K562 (cell line): ENCODE measurements at regions of chr1 and their contacts with region 1.

Region 1: GRCh38 chr1:54764133-54764921 is at the start of gene PARS2:
- DNase-seq: peak; percentile 99 to 100 (median 100)
- ATAC-seq: peak; percentile 97
- H3K4me3 ChIP-seq: peak within 1 kb of the TSS; percentile 87
- H3K27ac ChIP-seq: peak within 1 kb of the TSS; percentile 75
- H3K4me1 ChIP-seq: peaks cover 0 to 7% of the 10 kb centered on the region in 2 experiments; a peak in 2 of 5 replicates
- H3K27me3 ChIP-seq: no peaks in the 10 kb centered on the region; a peak in 1 of 5 replicates
- CTCF ChIP-seq: no peak; a peak in 2 of 6 replicates
- EP300 ChIP-seq: no peak
- POLR2A ChIP-seq: peak; percentile 95
- RAD21 ChIP-seq: no peak
- polyA plus RNA-seq, gene PARS2: 6.3 to 11.4 TPM

Region 2: DNA sequence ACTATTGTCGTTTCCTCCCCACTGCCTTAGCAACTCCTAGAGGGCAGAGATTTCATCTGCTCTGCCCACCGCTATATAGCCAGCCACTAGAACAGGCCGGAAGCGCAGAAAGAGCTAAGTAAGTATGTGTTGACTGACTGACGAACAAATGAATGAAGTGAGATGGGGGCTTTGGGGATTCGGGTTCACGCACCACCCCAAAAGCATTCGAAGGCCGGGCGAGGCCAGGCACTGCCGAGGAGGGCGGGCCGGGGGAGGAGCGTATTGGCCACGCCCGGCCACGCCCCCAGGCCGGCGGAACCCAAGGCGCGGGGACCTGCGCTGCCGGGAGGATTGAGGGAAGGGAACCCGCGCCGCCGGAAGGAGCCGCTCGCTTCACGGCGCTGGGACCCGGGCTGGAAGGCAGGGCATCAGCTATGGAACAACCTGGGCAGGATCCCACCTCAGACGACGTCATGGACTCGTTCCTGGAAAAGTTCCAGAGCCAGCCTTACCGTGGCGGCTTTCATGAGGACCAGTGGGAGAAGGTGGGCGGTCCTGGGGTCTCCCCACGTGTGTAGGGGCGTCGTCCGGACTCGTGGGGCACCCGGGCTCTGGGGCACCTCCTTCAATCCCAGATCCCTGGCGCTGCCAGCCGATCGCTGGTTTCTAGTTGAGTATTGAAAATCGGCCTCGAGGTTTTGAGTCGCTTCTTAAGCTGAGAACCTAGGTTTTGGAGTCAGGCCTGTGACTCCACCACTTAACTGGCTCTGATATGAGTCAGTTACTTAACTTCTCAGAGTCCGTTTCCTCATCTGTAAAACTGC is 48.6 kb before region 1 on chr1 and contains the start of gene TTC4:
- CTCF ChIA-PET with region 1: no interaction called
- POLR2A ChIA-PET with region 1: no interaction called
- in situ Hi-C with region 1: no loop called
- intact Hi-C with region 1: loop called (anchors 2 kb)
- DNase-seq: peak; percentile 92 to 97 (median 96)
- ATAC-seq: peak; percentile 99
- H3K4me3 ChIP-seq: peak within 1 kb of the TSS; percentile 88
- H3K27ac ChIP-seq: peak within 1 kb of the TSS; percentile 83
- H3K4me1 ChIP-seq: peaks cover 5 to 8% of the 10 kb centered on the region in 2 experiments; a peak in 4 of 5 replicates
- H3K27me3 ChIP-seq: peaks cover 9 to 17% of the 10 kb centered on the region in 2 experiments; a peak in 4 of 5 replicates
- CTCF ChIP-seq: 0 out of 6 replicates have a peak, but pooled peaks of 1 of the 3 experiments have one; percentile 17
- EP300 ChIP-seq: peak; percentile 51
- POLR2A ChIP-seq: peak; percentile 97
- RAD21 ChIP-seq: no peak
- polyA plus RNA-seq, gene TTC4: 46.1 to 111 TPM

Region 3: GRCh38 chr1:54743416-54744226 is 20.7 kb before region 1 on chr1:
- CTCF ChIA-PET with region 1: no interaction called
- POLR2A ChIA-PET with region 1: interaction called, 10 read pairs
- in situ Hi-C with region 1: no loop called
- intact Hi-C with region 1: no loop called
- DNase-seq: no peak
- ATAC-seq: peak; percentile 10
- H3K4me3 ChIP-seq: no peak overlapping the region
- H3K27ac ChIP-seq: no peak overlapping the region
- H3K4me1 ChIP-seq: no peaks in the 10 kb centered on the region
- H3K27me3 ChIP-seq: peaks cover 0 to 15% of the 10 kb centered on the region in 2 experiments; a peak in 2 of 5 replicates
- CTCF ChIP-seq: no peak
- EP300 ChIP-seq: no peak
- POLR2A ChIP-seq: peak; percentile 37; the same call in 1 of the 2 replicates
- RAD21 ChIP-seq: no peak

Region 4: GRCh38 chr1:54750596-54750995 is 13.7 kb before region 1 on chr1:
- CTCF ChIA-PET with region 1: no interaction called
- POLR2A ChIA-PET with region 1: interaction called, 19 read pairs
- in situ Hi-C with region 1: no loop called
- intact Hi-C with region 1: no loop called
- DNase-seq: no peak
- ATAC-seq: no peak
- H3K4me3 ChIP-seq: no peak overlapping the region
- H3K27ac ChIP-seq: no peak overlapping the region
- H3K4me1 ChIP-seq: peaks cover 0 to 14% of the 10 kb centered on the region in 2 experiments; a peak in 2 of 5 replicates
- H3K27me3 ChIP-seq: peaks cover 6 to 23% of the 10 kb centered on the region in 2 experiments; a peak in 4 of 5 replicates
- CTCF ChIP-seq: no peak
- EP300 ChIP-seq: no peak
- POLR2A ChIP-seq: no peak
- RAD21 ChIP-seq: no peak

Region 5: GRCh38 chr1:54810100-54810942 is 46.0 kb after region 1 on chr1:
- CTCF ChIA-PET with region 1: no interaction called
- POLR2A ChIA-PET with region 1: no interaction called
- in situ Hi-C with region 1: no loop called
- intact Hi-C with region 1: no loop called
- DNase-seq: peak; percentile 70 to 80 (median 79)
- ATAC-seq: peak; percentile 95
- H3K4me3 ChIP-seq: no peak overlapping the region
- H3K27ac ChIP-seq: no peak overlapping the region
- H3K4me1 ChIP-seq: peaks cover 0 to 6% of the 10 kb centered on the region in 2 experiments; a peak in 1 of 5 replicates
- H3K27me3 ChIP-seq: peaks cover 22 to 60% of the 10 kb centered on the region in 2 experiments
- CTCF ChIP-seq: peak; percentile 84 to 93 (median 92)
- EP300 ChIP-seq: no peak
- POLR2A ChIP-seq: no peak
- RAD21 ChIP-seq: peak; percentile 87 to 93

Region 6: DNA sequence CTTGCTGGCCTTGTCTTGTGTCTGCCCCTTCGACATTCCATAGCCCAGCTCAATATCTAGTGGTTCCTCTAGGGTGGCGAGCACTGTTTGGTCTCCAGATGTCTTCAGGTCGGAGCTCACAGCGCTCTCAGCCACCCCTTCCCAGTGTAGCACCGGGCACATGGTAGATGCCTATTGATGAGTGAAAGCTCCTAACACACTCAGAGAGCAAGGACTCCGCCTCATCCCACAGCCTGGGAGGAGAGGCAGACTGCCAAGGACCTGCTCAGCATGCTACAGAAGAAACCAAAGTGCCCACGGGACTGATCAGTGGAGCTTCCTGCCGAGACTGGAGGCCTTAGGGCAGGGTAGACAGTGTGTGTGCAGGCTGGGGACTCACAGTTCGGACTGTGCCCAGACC is 286.0 kb after region 1 on chr1:
- CTCF ChIA-PET with region 1: no interaction called
- POLR2A ChIA-PET with region 1: no interaction called
- in situ Hi-C with region 1: no loop called
- intact Hi-C with region 1: no loop called
- DNase-seq: no peak
- ATAC-seq: no peak
- H3K4me3 ChIP-seq: no peak overlapping the region
- H3K27ac ChIP-seq: no peak overlapping the region
- H3K4me1 ChIP-seq: peaks cover 0 to 5% of the 10 kb centered on the region in 2 experiments; a peak in 2 of 5 replicates
- H3K27me3 ChIP-seq: no peaks in the 10 kb centered on the region
- CTCF ChIP-seq: no peak
- EP300 ChIP-seq: no peak
- POLR2A ChIP-seq: no peak
- RAD21 ChIP-seq: no peak